CD14-positive monocyte (primary cell): ENCODE measurements at regions of chr6 and their contacts with region 1.

Region 1: DNA sequence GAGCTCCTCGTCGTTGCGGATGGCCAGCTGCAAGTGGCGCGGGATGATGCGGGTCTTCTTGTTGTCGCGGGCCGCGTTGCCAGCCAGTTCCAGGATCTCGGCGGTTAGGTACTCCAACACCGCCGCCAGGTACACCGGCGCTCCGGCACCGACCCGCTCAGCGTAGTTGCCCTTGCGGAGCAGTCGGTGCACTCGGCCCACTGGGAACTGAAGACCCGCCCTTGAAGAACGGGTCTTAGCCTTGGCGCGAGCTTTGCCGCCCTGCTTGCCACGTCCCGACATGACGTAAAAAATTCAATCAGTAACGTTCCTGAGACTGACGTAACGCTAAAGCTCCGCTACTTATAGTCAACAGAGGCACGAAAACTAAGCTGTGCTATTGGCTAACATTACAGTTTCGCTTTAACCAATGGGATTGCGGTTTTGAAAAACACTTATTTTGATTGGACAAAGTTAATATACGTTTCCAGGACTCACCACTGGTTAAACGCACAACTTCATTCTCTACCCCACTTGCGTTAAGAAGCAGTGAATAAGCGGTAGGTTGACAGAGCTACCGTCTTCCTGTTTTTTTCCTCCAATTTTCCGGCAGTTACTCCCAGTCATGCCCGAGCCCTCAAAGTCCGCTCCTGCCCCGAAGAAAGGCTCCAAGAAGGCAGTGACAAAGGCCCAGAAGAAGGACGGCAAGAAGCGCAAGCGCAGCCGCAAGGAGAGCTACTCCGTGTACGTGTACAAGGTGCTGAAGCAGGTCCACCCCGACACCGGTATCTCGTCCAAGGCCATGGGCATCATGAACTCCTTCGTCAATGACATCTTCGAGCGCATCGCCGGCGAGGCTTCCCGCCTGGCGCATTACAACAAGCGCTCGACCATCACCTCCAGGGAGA is 73.9 kb downstream of the OR2B2 start:
- DNase-seq: peak; percentile 95 to 100 (median 97)
- H3K4me3 ChIP-seq: peak overlapping the region; percentile 75 to 87 (median 77)
- H3K4me3 Mint-ChIP-seq: no peak overlapping the region
- H3K27ac ChIP-seq: peak overlapping the region; percentile 95 to 96
- H3K27ac Mint-ChIP-seq: no peak overlapping the region
- H3K4me1 ChIP-seq: peaks cover 33 to 47% of the 10 kb centered on the region in 2 donors
- H3K4me1 Mint-ChIP-seq: peaks cover 14% of the 10 kb centered on the region
- H3K27me3 ChIP-seq: no peaks in the 10 kb centered on the region
- H3K27me3 Mint-ChIP-seq: no peaks in the 10 kb centered on the region
- CTCF ChIP-seq: no peak

Region 2: GRCh38 chr6:27642744-27643456 is 195.4 kb before region 1 on chr6:
- intact Hi-C with region 1: no loop called
- DNase-seq: no peak
- H3K4me3 ChIP-seq: no peak overlapping the region
- H3K4me3 Mint-ChIP-seq: no peak overlapping the region
- H3K27ac ChIP-seq: no peak overlapping the region
- H3K27ac Mint-ChIP-seq: no peak overlapping the region
- H3K4me1 ChIP-seq: no peaks in the 10 kb centered on the region
- H3K4me1 Mint-ChIP-seq: no peaks in the 10 kb centered on the region
- H3K27me3 ChIP-seq: no peaks in the 10 kb centered on the region
- H3K27me3 Mint-ChIP-seq: peaks cover 6 to 13% (median 7%) of the 10 kb centered on the region in 3 donors
- CTCF ChIP-seq: no peak

Region 3: GRCh38 chr6:27864906-27865849 is 26.9 kb after region 1 on chr6:
- intact Hi-C with region 1: loop called (anchors 2 kb)
- DNase-seq: peak; percentile 98 to 100 (median 99)
- H3K4me3 ChIP-seq: peak overlapping the region; percentile 65 to 78 (median 68)
- H3K4me3 Mint-ChIP-seq: peak overlapping the region; percentile 97 to 98
- H3K27ac ChIP-seq: peak overlapping the region; percentile 79 to 92
- H3K27ac Mint-ChIP-seq: peak overlapping the region; percentile 97 to 99 (median 99)
- H3K4me1 ChIP-seq: peaks cover 35 to 40% of the 10 kb centered on the region in 2 donors
- H3K4me1 Mint-ChIP-seq: peaks cover 44% of the 10 kb centered on the region
- H3K27me3 ChIP-seq: no peaks in the 10 kb centered on the region
- H3K27me3 Mint-ChIP-seq: peaks cover 0 to 4% (median 2%) of the 10 kb centered on the region in 3 donors
- CTCF ChIP-seq: no peak

Region 4: GRCh38 chr6:29723262-29723665 is 1885.0 kb after region 1 on chr6 and contains the start of gene HLA-F:
- intact Hi-C with region 1: no loop called
- DNase-seq: peak; percentile 91 to 98 (median 96)
- H3K4me3 ChIP-seq: peak within 1 kb of the TSS; percentile 80 to 99 (median 89)
- H3K4me3 Mint-ChIP-seq: peak within 1 kb of the TSS; percentile 93 to 95
- H3K27ac ChIP-seq: peak within 1 kb of the TSS; percentile 88 to 96
- H3K27ac Mint-ChIP-seq: peak within 1 kb of the TSS; percentile 94 to 99 (median 96)
- H3K4me1 ChIP-seq: peaks cover 18 to 22% of the 10 kb centered on the region in 2 donors
- H3K4me1 Mint-ChIP-seq: peaks cover 50% of the 10 kb centered on the region
- H3K27me3 ChIP-seq: no peaks in the 10 kb centered on the region
- H3K27me3 Mint-ChIP-seq: peaks cover 1 to 6% (median 5%) of the 10 kb centered on the region in 3 donors
- CTCF ChIP-seq: no peak
- polyA plus RNA-seq, gene HLA-F: 283 to 816 (median 394) TPM